Mammary epithelial cell (primary cell): ENCODE measurements at regions of chr19 and their contacts with region 1.

Region 1: DNA sequence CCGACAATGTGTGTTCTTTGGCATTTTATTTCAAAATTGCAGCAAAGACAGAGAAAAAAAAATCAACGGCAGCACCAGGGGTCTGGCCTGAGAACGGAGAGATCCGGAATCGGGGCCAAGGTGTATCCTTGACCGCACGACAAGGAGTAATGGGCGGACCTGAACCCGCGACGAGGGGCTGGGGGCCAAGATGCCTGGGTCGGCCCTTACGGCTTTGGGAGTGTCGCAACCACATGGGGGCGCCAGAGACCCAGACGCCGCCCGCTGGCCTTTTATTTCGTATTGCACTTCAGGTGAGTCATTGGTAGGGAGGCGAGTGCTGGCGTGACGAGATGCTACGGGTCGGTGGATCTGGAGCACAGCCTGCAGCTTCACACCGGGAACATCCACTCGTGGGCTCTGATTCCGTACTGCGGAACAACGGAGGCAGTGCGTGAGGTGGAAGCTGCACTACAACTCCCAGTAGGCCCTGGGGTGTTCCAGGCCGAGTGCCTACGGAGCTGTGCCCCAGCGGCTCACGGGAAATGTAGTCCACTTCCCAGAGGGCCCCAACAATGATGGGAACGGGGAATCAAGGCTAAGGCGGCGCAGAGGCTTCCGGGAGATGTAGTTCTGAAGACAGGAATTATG is 15.7 kb downstream of the BCAT2 start:
- DNase-seq: peak; percentile 88
- H3K4me3 ChIP-seq: peak overlapping the region; percentile 17 to 53 (median 38)
- H3K27ac ChIP-seq: peak overlapping the region; percentile 31
- H3K4me1 ChIP-seq: peaks cover 24% of the 10 kb centered on the region
- H3K27me3 ChIP-seq: no peaks in the 10 kb centered on the region
- CTCF ChIP-seq: peak; percentile 77 to 97

Region 2: DNA sequence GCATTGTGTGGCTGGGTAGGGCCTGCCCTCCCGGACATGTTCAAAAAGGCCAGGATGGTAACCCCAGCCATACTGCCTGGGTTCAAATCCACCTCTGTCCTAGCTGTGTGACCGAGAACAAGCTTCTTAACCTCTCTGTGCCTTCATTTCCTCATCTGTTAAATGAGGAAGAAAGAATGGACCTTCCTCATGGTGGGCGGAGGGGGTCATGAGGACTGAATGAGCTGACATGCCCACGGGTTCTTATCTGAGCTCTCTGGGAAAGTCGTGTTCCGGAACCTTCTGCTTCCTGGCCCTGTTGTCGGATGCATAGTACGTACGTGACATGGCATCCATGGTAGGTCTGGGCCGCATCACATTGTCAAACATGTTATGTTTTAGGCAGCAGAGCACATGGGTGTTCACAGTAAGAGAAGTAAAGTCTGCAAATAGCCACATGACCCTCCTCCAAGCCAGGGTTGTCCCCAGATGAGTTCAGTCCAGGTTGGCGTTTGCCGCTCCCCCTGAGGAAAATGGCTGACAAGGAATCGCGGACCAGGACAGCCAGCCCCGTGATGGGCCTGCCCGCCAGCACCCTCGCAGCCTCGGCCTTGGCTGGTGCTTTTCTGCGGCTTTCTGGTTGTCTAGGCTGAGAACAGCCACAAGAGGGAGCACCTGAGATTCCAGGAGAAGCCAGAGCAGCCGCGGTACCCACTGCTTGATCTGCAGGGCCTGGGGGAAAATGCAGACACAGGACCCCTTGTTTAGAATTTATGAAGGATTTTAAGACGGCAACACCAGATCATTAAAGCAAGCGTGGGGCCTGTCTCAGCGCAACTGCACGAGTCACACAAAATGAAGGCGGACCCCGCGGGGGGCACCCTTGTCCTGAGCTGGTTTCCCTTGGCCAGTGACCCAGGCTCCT is 120.0 kb before region 1 on chr19:
- CTCF ChIA-PET with region 1: no interaction called
- dilution Hi-C with region 1: loop called (anchors 10 kb)
- in situ Hi-C with region 1: no loop called
- intact Hi-C with region 1: no loop called
- DNase-seq: peak; percentile 70
- H3K4me3 ChIP-seq: no peak overlapping the region
- H3K27ac ChIP-seq: no peak overlapping the region
- H3K4me1 ChIP-seq: peaks cover 4% of the 10 kb centered on the region
- H3K27me3 ChIP-seq: no peaks in the 10 kb centered on the region
- CTCF ChIP-seq: peak; percentile 79 to 85

Region 3: GRCh38 chr19:48812094-48812929 is 17.1 kb after region 1 on chr19:
- CTCF ChIA-PET with region 1: interaction called, 16 read pairs
- dilution Hi-C with region 1: no loop called
- in situ Hi-C with region 1: no loop called
- intact Hi-C with region 1: loop called (anchors 1 kb)
- DNase-seq: peak; percentile 46
- H3K4me3 ChIP-seq: peak overlapping the region; percentile 27 to 41 (median 29)
- H3K27ac ChIP-seq: no peak overlapping the region
- H3K4me1 ChIP-seq: peaks cover 8% of the 10 kb centered on the region
- H3K27me3 ChIP-seq: no peaks in the 10 kb centered on the region
- CTCF ChIP-seq: no peak

Region 4: DNA sequence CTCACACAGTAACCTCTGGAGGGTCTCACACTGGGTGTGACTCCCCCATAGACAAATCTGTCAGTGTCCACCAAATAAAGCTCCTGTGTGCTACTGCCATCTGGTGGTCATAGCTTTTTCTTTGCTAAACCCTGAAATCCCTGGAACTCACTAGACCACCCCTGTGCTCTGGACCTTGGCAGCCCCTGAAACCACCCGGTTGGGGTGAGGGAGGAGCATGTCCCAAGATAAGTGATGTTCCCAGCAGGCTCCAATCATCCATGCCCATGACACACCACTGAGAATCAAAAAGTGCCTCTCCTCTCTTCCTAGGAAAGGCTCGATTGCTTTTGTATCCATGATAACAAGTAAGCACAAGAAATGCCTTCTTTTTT is 47.6 kb after region 1 on chr19:
- CTCF ChIA-PET with region 1: interaction called, 5 read pairs
- dilution Hi-C with region 1: loop called (anchors 5 kb)
- in situ Hi-C with region 1: loop called (anchors 5 kb)
- intact Hi-C with region 1: no loop called
- DNase-seq: no peak
- H3K4me3 ChIP-seq: no peak overlapping the region
- H3K27ac ChIP-seq: no peak overlapping the region
- H3K4me1 ChIP-seq: no peaks in the 10 kb centered on the region
- H3K27me3 ChIP-seq: no peaks in the 10 kb centered on the region
- CTCF ChIP-seq: peak; percentile 68 to 81

Region 5: DNA sequence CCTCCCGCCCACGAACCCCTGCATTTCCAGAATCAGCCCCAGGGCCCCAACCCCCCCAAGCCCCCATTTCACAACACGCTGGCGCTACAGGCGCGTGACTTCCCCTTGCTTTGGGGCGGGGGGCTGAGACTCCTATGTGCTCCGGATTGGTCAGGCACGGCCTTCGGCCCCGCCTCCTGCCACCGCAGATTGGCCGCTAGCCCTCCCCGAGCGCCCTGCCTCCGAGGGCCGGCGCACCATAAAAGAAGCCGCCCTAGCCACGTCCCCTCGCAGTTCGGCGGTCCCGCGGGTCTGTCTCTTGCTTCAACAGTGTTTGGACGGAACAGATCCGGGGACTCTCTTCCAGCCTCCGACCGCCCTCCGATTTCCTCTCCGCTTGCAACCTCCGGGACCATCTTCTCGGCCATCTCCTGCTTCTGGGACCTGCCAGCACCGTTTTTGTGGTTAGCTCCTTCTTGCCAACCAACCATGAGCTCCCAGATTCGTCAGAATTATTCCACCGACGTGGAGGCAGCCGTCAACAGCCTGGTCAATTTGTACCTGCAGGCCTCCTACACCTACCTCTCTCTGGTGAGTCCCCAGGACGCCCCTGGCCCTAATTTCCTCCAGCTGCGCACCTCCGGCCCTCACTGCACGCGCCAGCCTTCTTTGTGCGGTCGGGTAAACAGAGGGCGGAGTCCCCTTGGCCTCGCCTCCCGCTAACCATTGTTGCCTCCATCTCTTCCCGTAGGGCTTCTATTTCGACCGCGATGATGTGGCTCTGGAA is 170.1 kb after region 1 on chr19 and contains the start of gene FTL:
- CTCF ChIA-PET with region 1: interaction called, 5 read pairs
- dilution Hi-C with region 1: loop called (anchors 5 kb)
- in situ Hi-C with region 1: loop called in 1 of 2 experiments (anchors 25 kb)
- intact Hi-C with region 1: no loop called
- DNase-seq: peak; percentile 80
- H3K4me3 ChIP-seq: peak within 1 kb of the TSS; percentile 51 to 62 (median 52)
- H3K27ac ChIP-seq: peak within 1 kb of the TSS; percentile 7
- H3K4me1 ChIP-seq: peaks cover 27% of the 10 kb centered on the region
- H3K27me3 ChIP-seq: no peaks in the 10 kb centered on the region
- CTCF ChIP-seq: no peak
- total RNA-seq, gene FTL: 186 to 287 TPM

Region 6: GRCh38 chr19:48993175-48994034 is 198.2 kb after region 1 on chr19 and contains the starts of genes GYS1 and RUVBL2:
- CTCF ChIA-PET with region 1: interaction called, 14 read pairs
- dilution Hi-C with region 1: no loop called
- in situ Hi-C with region 1: no loop called
- intact Hi-C with region 1: no loop called
- DNase-seq: peak; percentile 100
- H3K4me3 ChIP-seq: peak within 1 kb of the TSS; percentile 81 to 89 (median 86)
- H3K27ac ChIP-seq: peak within 1 kb of the TSS; percentile 86
- H3K4me1 ChIP-seq: peaks cover 28% of the 10 kb centered on the region
- H3K27me3 ChIP-seq: no peaks in the 10 kb centered on the region
- CTCF ChIP-seq: peak; percentile 83 to 92
- total RNA-seq, gene GYS1: 40.0 to 79.8 TPM
- total RNA-seq, gene RUVBL2: 108 to 148 TPM